Esophagus muscularis mucosa (tissue), 4 donors: ENCODE measurements at regions of chr18 and their contacts with region 1.

Region 1: DNA sequence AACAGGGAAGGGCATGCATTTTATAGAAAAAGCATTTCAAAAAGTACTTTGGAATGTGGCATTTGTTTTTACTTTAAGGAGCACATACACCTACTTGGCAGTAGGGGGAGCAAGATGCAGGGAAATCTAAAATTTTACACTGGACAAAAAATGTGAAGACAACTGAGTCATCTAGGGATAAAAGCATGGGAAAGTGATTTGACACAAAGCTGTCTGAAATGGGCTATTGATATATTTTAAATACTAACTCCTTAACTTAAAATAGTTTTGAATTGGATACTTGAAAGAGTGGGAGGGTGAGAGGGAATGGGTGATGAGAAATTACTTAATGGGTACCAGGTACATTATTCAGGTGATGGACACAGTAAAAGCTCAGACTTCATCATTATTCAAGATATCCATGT is 15.8 kb downstream of the TMEM200C start:
- DNase-seq: no peak
- H3K4me3 ChIP-seq: no peak overlapping the region
- H3K27ac ChIP-seq: no peak overlapping the region
- H3K4me1 ChIP-seq: no peaks in the 10 kb centered on the region
- H3K27me3 ChIP-seq: peaks cover 0 to 31% (median 5%) of the 10 kb centered on the region in 4 donors
- CTCF ChIP-seq: peak; percentile 52 to 77 (median 72)
- EP300 ChIP-seq: no peak
- POLR2A ChIP-seq: no peak

Region 2: DNA sequence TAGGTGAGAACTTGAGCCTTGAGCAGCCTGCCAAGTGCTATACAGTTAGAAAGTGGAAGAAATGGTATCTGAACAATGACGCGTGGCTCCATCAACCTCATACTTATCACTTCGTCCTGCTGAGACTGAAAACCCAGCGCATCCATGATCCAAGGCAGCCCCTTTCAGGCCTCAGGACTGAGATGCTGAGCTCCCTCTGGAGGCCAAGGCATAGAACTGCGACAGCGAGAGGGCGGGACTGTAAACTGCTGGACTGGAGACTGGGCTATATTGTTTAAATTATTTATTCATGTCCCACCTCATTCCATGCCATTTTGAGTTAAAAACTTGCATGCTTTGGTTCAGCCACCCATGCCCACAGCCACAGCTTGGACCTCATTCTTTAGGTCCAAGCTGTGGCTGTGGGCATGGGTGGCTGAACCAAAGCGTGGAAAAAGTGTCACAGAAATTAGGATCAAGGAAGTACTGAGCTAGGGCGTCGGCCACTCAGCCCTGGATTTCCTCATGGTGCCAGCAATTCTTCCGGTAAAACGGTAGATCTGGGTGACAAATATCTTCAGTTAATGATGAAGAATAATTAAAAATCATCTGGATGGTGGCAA is 339.7 kb after region 1 on chr18:
- intact Hi-C with region 1: loop called (anchors 5 kb)
- DNase-seq: no peak
- H3K4me3 ChIP-seq: no peak overlapping the region
- H3K27ac ChIP-seq: no peak overlapping the region
- H3K4me1 ChIP-seq: no peaks in the 10 kb centered on the region
- H3K27me3 ChIP-seq: no peaks in the 10 kb centered on the region
- CTCF ChIP-seq: peak; percentile 45 to 74 (median 63)
- EP300 ChIP-seq: no peak
- POLR2A ChIP-seq: no peak

Region 3: DNA sequence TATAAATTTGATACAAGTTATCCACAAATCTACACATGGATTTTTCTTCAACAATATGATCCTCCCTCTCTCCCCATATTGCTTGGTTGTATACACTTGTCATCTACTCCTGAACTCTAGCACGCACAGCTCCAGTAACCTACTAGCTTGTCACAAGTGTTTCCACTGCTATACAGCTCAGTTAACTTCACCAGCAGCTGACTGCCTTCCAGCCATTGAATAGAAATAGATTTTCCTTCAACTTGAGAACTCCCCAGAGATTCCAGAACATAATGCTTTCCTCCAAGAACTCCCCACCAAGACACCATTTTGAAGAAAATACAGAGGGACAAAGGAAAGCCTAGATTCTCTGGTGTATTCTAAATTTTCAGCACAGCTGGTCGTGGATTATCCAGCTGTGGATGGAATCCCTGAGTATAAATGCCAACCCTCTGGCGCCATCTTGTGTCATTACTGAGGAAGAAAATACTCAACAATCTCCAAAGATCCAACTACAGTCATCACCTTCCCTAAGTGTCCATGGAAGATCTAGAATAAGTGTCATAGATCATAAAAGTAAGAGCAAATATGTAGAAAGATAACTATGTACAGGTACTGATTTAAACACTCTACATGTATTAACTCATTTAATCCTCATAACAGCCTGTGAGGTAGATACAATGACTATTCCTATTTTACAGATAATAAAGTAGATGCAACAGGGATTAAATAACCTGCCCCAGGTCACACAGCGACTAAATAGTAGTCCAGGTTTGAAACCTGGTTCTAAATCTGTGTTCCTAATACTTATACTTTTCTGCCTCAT is 1006.7 kb after region 1 on chr18:
- intact Hi-C with region 1: loop called (anchors 5 kb)
- DNase-seq: no peak
- H3K4me3 ChIP-seq: no peak overlapping the region
- H3K27ac ChIP-seq: no peak overlapping the region
- H3K4me1 ChIP-seq: peaks cover 0 to 18% (median 9%) of the 10 kb centered on the region in 4 donors
- H3K27me3 ChIP-seq: no peaks in the 10 kb centered on the region
- CTCF ChIP-seq: peak; percentile 62 to 68 (median 67)
- EP300 ChIP-seq: no peak
- POLR2A ChIP-seq: no peak